ENCODE measurements at regions of chr5 and their contacts with region 1.

Region 1: DNA sequence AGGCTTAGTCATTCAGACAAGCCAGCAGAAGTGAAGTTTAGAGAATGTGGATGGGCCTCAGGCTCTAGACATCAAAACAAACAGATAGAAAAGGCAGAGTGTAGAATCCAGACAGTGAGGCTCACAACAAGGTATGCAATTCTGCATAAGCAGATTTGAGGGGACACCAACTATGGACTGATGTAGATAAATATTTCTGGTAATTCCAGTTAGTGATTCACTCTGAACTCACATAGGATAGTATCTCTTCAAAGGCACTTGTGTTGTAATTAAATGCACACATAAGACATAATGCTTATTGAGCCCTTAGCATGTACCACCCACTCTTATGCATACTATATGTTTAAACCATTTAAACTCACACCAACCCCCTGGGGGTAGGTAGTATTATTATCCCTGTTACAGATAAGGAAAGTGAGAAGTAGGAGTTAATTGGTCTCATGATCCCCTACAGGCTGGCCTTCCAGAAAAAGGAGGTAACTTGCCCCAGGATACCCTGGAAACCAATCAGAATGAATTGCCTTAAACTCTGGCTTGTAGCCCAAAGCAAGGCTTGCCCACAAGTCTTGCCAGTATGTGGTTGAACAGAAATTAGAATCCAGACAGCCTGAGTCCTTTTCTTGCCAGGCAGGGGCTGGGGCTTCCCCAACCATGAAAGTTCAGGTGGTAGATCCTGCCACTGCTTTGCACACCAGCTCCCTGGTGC is 39.5 kb upstream of the HSPB3 start:
- DNase-seq: no peak
- H3K4me3 ChIP-seq: no peak overlapping the region
- H3K27ac ChIP-seq: no peak overlapping the region
- H3K4me1 ChIP-seq: 0 out of 4 replicates have a peak, but pooled peaks cover 0 to 3% of the 10 kb centered on the region in 2 experiments
- H3K27me3 ChIP-seq: no peaks in the 10 kb centered on the region
- CTCF ChIP-seq: no peak
- EP300 ChIP-seq: no peak
- RAD21 ChIP-seq: no peak

Region 2: DNA sequence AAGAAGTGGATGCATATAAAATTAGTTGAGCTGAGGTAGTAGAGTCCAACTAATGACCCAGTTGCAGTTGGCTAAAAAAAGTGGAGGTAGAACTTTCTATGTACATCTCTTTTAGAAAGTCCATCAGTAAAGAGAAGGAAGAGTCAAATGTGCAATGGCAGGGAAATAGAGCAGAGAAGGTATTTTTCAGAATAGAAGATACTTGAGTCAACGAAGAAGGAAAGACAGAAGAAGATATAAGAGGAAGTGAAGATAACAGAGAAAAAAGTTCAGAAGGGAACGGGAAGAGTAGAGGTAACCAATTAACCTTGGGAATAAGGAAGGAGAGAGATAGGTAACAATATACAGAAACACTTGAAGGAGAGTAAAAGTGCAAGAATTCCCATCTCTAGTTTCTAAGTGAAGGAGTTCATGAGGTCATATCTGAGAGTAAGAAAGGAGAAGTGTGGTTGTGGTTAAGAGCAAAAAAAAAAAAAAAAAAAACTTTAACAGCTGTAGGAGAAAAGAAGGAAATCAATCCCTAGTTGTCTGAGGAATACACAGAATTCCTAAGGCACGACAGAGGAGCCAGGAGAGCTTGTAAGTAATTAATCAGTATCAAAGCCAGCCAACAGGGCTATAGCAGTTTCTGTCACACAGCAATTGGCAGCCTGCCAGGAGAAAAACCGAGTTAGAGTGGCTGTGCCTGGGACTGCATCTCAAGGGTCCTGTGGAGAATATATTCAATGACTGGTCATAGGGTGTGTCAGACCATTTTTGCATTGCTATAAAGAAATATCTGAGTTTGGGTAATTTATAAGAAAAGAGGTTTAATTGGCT is 166.6 kb before region 1 on chr5:
- CTCF ChIA-PET with region 1: interaction called, 26 read pairs
- POLR2A ChIA-PET with region 1: no interaction called
- DNase-seq: peak; percentile 8
- H3K4me3 ChIP-seq: no peak overlapping the region
- H3K27ac ChIP-seq: no peak overlapping the region
- H3K4me1 ChIP-seq: peaks cover 0 to 2% of the 10 kb centered on the region in 2 experiments; a peak in 1 of 4 replicates
- H3K27me3 ChIP-seq: no peaks in the 10 kb centered on the region
- CTCF ChIP-seq: no peak
- EP300 ChIP-seq: no peak
- RAD21 ChIP-seq: no peak

Region 3: DNA sequence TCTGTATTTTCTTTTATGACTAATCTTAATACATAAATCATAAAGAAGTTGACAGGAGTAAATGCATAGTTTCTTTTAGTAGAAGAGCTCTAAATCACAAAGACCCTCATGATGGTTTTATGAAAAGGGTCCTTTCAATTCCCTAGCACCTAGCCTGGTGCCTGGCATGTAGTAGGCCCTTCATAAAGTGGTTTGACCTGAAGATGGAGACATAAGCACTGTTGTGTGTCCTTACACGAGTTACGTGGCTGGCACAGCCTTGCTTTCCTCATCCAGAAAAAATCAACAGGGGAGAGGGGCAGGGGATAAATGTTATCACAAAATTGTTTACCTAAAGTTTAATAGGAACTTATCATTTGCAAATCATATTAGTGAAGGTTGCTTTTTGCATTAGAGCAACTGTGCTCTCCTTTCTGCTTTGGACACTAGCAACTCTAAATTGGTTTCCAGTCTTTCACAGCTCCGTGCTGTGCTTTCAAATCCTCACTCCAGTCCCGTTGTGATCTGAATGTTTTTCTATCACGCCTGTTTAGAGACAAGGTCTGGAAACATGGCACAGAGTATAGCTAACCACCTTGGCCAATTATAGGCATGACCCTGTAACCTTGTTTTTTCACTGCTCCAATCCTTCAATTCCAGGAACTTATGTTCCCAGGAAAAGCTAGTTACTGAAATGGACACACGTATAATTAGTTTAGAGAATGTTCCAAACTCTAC is 161.4 kb before region 1 on chr5:
- CTCF ChIA-PET with region 1: interaction called, 10 read pairs
- POLR2A ChIA-PET with region 1: no interaction called
- DNase-seq: no peak
- H3K4me3 ChIP-seq: no peak overlapping the region
- H3K27ac ChIP-seq: no peak overlapping the region
- H3K4me1 ChIP-seq: peaks cover 0 to 2% of the 10 kb centered on the region in 2 experiments; a peak in 1 of 4 replicates
- H3K27me3 ChIP-seq: no peaks in the 10 kb centered on the region
- CTCF ChIP-seq: peak; percentile 29; the same call in 1 of the 2 replicates
- EP300 ChIP-seq: no peak
- RAD21 ChIP-seq: peak; percentile 39

Measured in SK-N-SH (cell line).